ENCODE measurements at regions of chr3 and their contacts with region 1.

Region 1: GRCh38 chr3:150588027-150588830 is 14.9 kb upstream of the SELENOT start:
- DNase-seq: no peak
- ATAC-seq: peak; percentile 67
- H3K4me3 ChIP-seq: no peak overlapping the region
- H3K27ac ChIP-seq: no peak overlapping the region
- H3K4me1 ChIP-seq: peaks cover 6% of the 10 kb centered on the region; the same call in 1 of the 2 replicates
- H3K27me3 ChIP-seq: no peaks in the 10 kb centered on the region
- CTCF ChIP-seq: no peak

Region 2: GRCh38 chr3:150567328-150567727 is 20.9 kb before region 1 on chr3:
- CTCF ChIA-PET with region 1: no interaction called
- POLR2A ChIA-PET with region 1: interaction called, 13 read pairs
- in situ Hi-C with region 1: no loop called
- intact Hi-C with region 1: no loop called
- DNase-seq: no peak
- ATAC-seq: 0 out of 2 replicates have a peak, but pooled peaks have one; percentile 45
- H3K4me3 ChIP-seq: no peak overlapping the region
- H3K27ac ChIP-seq: no peak overlapping the region
- H3K4me1 ChIP-seq: no peaks in the 10 kb centered on the region
- H3K27me3 ChIP-seq: no peaks in the 10 kb centered on the region
- CTCF ChIP-seq: no peak